Psoas muscle (tissue), 8 donors: ENCODE measurements at regions of chr20 and their contacts with region 1.

Region 1: DNA sequence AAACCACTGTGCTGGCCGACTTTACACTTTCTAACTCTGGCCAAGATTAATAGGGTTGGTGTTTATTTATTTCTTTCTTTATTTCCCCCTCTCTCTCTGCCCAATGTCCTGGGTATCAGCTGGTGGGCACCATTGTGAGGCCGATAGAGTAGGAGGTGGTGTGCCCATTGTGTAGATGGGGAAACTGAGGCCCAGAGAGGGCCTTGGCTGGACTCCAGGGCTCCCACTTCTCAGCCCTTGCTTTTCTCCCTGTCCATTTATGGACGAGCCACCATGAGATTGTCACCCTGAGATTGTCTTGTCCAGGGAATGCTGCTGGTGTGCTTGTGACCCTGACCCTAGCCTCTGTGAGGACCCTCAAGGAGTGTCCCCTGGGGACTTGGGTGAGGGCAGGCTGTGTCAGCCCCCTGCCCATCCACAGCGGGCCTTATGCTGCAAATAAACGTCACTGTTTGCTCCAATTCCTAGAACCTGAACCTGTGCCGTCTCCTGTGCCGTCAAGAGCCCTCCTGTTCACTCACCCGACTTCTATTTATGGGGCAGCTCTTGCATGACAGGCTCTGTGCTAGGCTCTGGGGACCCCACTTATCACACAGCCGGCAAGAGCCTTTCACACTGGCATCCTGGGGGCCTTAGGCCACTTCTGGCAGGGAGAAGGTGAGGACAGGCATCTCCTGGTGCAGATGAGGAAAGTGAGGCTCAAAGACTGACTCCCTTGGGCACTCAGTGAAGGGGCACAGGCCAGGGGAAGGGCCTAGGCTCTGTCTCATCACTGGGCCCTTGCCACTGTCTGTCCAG is 24.8 kb downstream of the SUN5 start:
- DNase-seq: no peak
- ATAC-seq: no peak
- H3K4me3 ChIP-seq: no peak overlapping the region
- H3K27ac ChIP-seq: no peak overlapping the region
- H3K4me1 ChIP-seq: no peaks in the 10 kb centered on the region
- H3K27me3 ChIP-seq: no peaks in the 10 kb centered on the region
- CTCF ChIP-seq: no peak

Region 2: GRCh38 chr20:33004141-33004751 is 24.8 kb after region 1 on chr20 and contains the start of gene SUN5:
- intact Hi-C with region 1: loop called in 1 of 2 experiments (anchors 1 kb)
- DNase-seq: no peak
- ATAC-seq: no peak
- H3K4me3 ChIP-seq: no peak within 1 kb of the TSS
- H3K27ac ChIP-seq: no peak within 1 kb of the TSS
- H3K4me1 ChIP-seq: no peaks in the 10 kb centered on the region
- H3K27me3 ChIP-seq: no peaks in the 10 kb centered on the region
- CTCF ChIP-seq: no peak
- total RNA-seq, gene SUN5: not detected